GM10248 (cell line): ENCODE measurements at regions of chr19 and their contacts with region 1.

Region 1: GRCh38 chr19:33143897-33144405 is 12.0 kb downstream of the WDR88 start:
- DNase-seq: peak; percentile 85
- CTCF ChIP-seq: peak; percentile 94

Region 2: GRCh38 chr19:33085570-33086128 is 58.3 kb before region 1 on chr19:
- CTCF ChIA-PET with region 1: no interaction called
- POLR2A ChIA-PET with region 1: no interaction called
- DNase-seq: no peak
- CTCF ChIP-seq: no peak

Region 3: DNA sequence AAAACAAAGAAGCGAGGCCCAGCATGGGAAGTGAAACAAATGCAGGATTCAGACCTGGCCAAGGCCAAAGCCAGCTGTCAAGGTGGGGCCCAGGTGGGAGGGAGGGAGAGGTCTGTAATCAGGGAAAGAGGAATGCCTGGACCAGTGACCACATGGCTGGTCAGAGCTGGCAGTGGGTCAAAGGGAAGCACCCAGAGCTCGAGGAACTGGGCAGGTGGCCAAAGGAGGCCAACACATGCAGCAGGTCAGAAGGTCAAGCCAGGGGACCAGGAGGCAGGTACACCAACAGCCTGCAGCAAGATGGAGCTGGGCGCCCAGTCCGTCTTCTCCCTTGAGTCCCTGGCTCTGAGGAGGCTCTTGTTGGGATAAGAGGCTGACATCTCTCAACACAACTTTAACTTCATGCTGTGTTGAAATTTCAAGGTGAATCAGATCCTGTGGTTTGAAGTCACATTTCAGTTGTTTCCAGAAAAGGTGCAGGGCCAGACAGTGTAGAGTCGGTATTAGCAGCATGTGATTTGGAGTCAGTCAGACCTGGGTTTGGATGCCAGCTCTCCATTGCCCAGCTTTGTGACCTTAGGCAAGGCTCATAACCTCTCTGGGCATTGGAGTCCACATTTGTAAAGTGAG is 45.8 kb before region 1 on chr19:
- CTCF ChIA-PET with region 1: no interaction called
- POLR2A ChIA-PET with region 1: no interaction called
- DNase-seq: no peak
- CTCF ChIP-seq: no peak

Region 4: DNA sequence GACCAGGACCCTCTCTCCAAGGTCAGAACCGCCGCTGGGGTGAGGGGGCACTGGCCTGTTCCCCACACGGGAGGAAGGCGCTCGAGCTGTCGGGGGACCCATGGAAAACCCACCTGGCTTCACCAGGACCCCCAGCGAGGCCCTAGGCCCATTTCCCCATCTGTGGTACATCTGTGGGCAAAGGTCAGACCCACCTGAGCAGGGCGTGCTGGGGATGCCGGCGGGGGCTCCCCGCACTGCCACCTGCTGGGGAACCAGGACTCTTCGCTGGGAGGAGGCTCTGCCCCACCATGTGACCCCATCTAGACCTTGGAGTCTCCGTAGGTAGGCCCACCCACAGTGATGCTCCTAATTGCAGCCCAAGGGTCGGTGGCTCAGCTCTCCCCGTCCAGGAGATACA is 11.5 kb before region 1 on chr19:
- CTCF ChIA-PET with region 1: no interaction called
- POLR2A ChIA-PET with region 1: no interaction called
- DNase-seq: no peak
- CTCF ChIP-seq: peak; percentile 24

Region 5: DNA sequence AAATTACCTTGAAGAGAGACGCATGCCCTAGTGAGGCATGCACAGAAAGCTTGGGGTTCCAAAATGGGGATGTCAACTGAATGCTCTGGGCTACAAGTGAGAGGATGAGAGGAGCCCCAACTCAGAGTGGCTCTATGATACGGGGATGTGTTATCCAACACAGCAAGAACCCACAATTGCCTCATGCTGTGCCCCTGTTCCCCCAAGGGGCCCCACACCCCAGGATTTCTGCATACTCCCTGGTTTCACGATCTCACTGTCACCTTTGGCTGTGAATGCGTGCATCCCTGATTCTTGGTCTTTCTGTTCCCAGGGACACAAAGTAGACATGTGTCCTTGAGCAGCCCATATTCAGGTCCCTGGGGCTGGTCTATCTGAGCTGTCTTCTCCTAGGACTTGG is 17.2 kb after region 1 on chr19:
- CTCF ChIA-PET with region 1: interaction called, 12 read pairs
- POLR2A ChIA-PET with region 1: no interaction called
- DNase-seq: no peak
- CTCF ChIP-seq: no peak

Region 6: DNA sequence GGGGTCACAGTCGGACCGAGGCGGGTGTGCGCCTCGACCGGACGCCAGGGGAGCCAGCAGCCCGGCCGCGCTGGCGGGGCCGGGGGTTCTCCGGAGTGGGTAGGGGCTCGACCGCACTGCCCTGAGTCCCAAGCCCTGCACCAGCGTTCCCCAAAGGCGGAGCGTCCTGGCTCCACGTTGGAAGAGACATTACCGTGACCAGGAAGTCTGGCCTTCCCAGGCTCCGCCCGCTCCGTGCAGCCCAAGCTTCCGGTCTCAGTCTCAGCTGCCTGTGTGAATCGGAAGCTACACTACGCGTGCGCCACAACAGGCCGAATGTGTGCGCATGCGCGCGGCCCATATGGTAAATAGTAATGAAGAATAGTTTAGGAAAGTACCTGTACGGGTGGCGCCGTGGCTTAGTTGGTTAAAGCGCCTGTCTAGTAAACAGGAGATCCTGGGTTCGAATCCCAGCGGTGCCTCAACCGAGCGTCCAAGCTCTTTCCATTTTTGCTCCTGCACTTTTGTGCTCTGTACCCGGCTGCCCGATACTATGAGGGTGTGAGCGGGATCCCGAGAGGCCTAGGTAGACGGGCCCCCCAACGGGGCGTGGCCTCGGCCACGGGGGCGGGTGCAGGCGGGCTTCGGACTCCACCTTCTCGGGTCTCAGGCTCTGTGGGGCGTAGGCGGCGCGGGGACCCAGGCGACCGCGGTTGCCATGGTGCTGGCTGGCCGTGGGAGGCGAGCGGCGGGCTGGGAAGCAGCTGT is 32.9 kb after region 1 on chr19:
- CTCF ChIA-PET with region 1: interaction called, 23 read pairs
- POLR2A ChIA-PET with region 1: no interaction called
- DNase-seq: peak; percentile 98
- CTCF ChIP-seq: no peak

Region 7: DNA sequence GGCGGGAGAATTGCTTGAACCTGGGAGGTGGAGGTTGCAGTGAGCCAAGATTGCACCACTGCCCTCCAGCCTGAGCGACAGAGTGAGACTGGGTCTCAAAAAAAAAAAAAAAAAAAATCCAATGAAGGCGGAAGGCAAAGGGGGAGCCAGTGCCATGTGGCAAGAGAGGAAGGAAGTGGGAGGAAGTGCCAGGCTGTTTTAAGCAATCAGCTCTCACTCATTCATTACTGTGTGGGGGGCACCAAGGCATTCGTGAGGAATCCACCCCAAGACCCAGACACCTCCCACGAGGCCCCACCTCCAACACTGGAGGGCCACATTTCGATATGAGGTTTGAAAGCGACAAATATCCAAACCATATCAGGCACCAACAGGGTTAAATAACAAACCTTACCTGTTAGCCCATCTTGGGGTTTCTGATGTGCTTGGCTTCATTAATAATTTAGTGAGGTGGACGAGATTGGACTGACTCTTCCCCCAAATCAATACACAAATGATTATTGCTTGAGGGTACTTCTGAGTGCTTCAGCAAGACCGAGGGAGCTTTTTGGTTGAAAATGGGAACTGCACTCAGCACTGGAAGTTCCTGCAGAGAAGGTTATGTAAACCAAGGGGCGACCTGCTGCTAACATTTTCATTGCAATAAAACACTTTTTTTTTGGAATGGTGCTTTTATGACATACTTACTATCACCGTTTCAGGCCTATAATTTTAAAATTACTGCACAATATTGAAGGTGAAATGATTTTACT is 42.7 kb after region 1 on chr19:
- CTCF ChIA-PET with region 1: interaction called, 33 read pairs
- POLR2A ChIA-PET with region 1: no interaction called
- DNase-seq: no peak
- CTCF ChIP-seq: no peak

Region 8: GRCh38 chr19:33204136-33204973 is 60.4 kb after region 1 on chr19:
- CTCF ChIA-PET with region 1: no interaction called
- POLR2A ChIA-PET with region 1: no interaction called
- DNase-seq: no peak
- CTCF ChIP-seq: no peak